A549 (cell line): ENCODE measurements at regions of chr12 and their contacts with region 1.

Region 1: DNA sequence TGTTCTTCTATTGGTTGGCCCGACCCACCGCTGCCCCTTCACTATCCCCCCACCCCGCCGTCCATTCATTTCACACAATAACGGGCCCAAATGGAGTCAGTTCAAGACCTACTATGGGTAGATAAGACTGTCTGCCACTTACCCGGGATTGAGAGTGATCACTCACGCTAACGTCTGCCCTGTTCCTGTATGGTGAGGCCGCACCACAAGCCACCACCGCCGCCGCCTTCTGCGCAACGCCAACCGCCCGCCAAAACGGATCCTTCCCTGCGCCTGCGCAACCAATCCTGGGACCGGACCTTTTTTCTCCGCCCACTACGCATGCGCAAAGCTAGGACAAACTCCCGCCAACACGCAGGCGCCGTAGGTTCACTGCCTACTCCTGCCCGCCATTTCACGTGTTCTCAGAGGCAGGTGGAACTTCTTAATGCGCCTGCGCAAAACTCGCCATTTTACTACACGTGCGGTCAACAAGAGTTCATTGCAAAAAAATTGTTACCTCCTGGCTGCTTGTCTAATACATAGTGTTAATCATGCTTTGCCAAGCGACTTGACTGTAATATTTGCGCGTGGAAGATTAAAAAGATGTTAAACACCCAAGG is at the start of gene CBX5:
- DNase-seq: peak; percentile 98 to 100
- ATAC-seq: peak; percentile 55 to 65
- H3K4me3 ChIP-seq: peak within 1 kb of the TSS; percentile 88
- H3K27ac ChIP-seq: peak within 1 kb of the TSS; percentile 87 to 96
- H3K4me1 ChIP-seq: peaks cover 22% of the 10 kb centered on the region
- CTCF ChIP-seq: no peak
- EP300 ChIP-seq: no peak
- POLR2A ChIP-seq: peak; percentile 84
- RAD21 ChIP-seq: no peak
- polyA plus RNA-seq, gene CBX5: 115 and 129 TPM in 2 replicates

Region 2: GRCh38 chr12:54259194-54260011 is 20.6 kb before region 1 on chr12:
- CTCF ChIA-PET with region 1: interaction called, 6 read pairs
- POLR2A ChIA-PET with region 1: interaction called, 36 read pairs
- DNase-seq: peak; percentile 91 to 95
- ATAC-seq: peak; percentile 92 to 94
- H3K4me3 ChIP-seq: peak overlapping the region; percentile 34
- H3K27ac ChIP-seq: peak overlapping the region; percentile 79 to 95
- H3K4me1 ChIP-seq: peaks cover 55% of the 10 kb centered on the region
- CTCF ChIP-seq: no peak
- EP300 ChIP-seq: no peak
- POLR2A ChIP-seq: no peak
- RAD21 ChIP-seq: no peak

Region 3: GRCh38 chr12:54266852-54267251 is 13.1 kb before region 1 on chr12:
- CTCF ChIA-PET with region 1: interaction called, 6 read pairs
- POLR2A ChIA-PET with region 1: interaction called, 28 read pairs
- DNase-seq: no peak
- ATAC-seq: no peak
- H3K4me3 ChIP-seq: no peak overlapping the region
- H3K27ac ChIP-seq: no peak overlapping the region
- H3K4me1 ChIP-seq: peaks cover 16% of the 10 kb centered on the region
- CTCF ChIP-seq: no peak
- EP300 ChIP-seq: no peak
- POLR2A ChIP-seq: no peak
- RAD21 ChIP-seq: no peak

Region 4: GRCh38 chr12:54294152-54294952 is 14.4 kb after region 1 on chr12:
- CTCF ChIA-PET with region 1: interaction called, 30 read pairs
- POLR2A ChIA-PET with region 1: interaction called, 18 read pairs
- DNase-seq: peak; percentile 68 to 83
- ATAC-seq: peak; percentile 31 to 51; a peak in 4 of 6 replicates
- H3K4me3 ChIP-seq: no peak overlapping the region
- H3K27ac ChIP-seq: no peak overlapping the region
- H3K4me1 ChIP-seq: no peaks in the 10 kb centered on the region
- CTCF ChIP-seq: peak; percentile 67
- EP300 ChIP-seq: no peak
- POLR2A ChIP-seq: no peak
- RAD21 ChIP-seq: peak; percentile 64 to 82